Mammary epithelial cell (primary cell): ENCODE measurements at regions of chr7 and their contacts with region 1.

Region 1: DNA sequence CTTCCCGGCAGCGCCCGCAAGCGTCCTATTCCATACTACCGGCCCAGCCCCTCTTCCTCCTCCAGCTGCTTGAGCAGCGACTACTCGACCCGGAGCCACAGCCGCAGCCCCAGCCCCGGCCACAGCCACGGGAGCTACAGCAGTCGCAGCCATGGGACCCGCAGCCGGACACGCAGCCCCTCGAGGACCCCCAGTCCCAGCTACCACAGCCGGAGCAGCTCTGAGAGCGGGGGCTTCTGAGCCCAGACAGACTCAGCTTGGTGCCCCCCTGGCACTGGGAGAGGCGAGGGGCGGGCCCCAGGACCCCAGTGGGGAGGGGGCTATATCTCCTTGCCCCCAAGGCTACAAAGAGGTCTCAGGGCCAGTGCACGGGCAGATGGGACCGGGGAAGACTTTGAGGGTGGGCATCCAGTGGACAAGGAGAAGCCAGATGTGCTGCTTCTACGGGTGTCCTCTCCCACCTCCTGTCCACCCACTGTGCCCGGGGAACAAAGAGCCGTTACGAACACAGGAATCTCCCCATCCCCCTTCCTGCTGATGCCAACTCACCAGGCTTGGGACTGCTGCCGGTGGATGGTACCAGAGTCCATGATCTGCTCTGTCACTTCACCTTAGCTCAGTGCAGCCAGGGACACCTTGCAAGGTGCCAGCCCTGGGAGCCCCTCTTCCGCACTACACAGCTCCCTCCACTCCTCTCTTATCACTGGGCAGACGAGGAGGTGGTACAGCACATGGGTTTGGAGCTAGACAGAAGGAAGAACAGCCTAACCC is 16.7 kb upstream of the HSPB1 start:
- DNase-seq: no peak
- H3K4me3 ChIP-seq: no peak overlapping the region
- H3K27ac ChIP-seq: no peak overlapping the region
- H3K4me1 ChIP-seq: peaks cover under 1% of the 10 kb centered on the region
- H3K27me3 ChIP-seq: peaks cover 8% of the 10 kb centered on the region
- CTCF ChIP-seq: no peak

Region 2: GRCh38 chr7:76220185-76221057 is 65.4 kb before region 1 on chr7:
- CTCF ChIA-PET with region 1: no interaction called
- dilution Hi-C with region 1: loop called (anchors 5 kb)
- in situ Hi-C with region 1: no loop called
- intact Hi-C with region 1: no loop called
- DNase-seq: peak; percentile 24
- H3K4me3 ChIP-seq: no peak overlapping the region
- H3K27ac ChIP-seq: no peak overlapping the region
- H3K4me1 ChIP-seq: peaks cover 6% of the 10 kb centered on the region
- H3K27me3 ChIP-seq: no peaks in the 10 kb centered on the region
- CTCF ChIP-seq: peak in 1 of 2 donors; percentile 7